ENCODE measurements at regions of chr7 and their contacts with region 1.

Region 1: DNA sequence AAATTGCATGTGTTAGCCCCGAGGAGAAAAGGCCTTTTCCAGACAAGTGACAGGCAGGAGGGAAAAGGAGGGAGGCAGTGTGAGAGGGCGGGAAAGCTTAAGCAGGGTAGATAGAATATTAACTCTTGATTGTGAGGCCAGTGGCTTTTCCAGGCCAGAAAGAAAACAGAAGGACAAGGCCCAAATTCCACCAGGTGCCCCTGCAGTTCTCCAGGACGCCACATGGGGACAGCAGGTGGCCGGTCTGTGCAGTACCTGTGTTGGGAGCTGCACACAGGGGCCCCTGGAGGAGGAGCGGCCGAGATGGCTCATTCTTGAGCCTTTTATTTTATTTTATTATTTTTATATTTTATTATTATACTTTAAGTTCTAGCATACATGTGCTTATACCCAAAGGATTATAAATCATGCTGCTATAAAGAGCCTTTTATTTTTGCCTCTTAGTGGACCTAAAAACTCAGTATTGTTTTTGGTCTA is 141.3 kb upstream of the KLF14 start:
- DNase-seq: peak; percentile 75 to 78
- ATAC-seq: peak; percentile 63 to 71
- H3K4me3 ChIP-seq: no peak overlapping the region
- H3K27ac ChIP-seq: peak overlapping the region; percentile 56 to 70; a peak in 5 of 6 replicates
- H3K4me1 ChIP-seq: peaks cover 95% of the 10 kb centered on the region
- CTCF ChIP-seq: peak; percentile 74
- EP300 ChIP-seq: no peak
- POLR2A ChIP-seq: no peak
- RAD21 ChIP-seq: peak; percentile 86 to 87

Region 2: DNA sequence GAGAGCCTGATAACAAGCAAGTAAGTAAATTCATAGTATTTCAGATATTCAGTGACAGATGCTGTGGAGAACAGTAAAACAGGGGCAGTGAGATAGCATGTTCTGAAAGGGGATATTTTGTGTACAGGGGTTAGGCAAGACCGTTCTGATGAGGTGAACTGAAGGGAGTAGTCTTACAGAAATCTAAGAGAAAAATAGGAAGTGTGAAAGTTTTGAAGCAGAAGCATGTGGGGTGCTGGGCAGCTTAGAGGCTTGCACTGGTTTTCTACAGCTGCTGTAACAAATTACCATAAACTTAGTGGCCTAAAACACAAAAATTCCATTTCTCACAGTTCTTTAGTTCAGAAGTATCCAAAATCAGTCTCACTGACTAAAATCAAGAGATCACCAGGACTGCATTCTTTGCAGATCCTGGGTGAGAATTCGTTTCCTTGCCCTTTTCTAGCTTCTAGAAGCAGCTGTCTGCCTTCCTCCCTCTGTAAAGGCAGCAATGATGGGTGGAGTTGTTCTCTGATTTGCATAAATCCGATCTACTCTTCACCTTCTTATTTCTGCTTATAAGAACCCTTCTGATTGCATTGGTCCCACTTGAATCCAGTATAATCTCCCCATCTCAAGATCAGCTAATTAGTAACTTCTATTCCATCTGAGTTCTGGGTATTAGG is 133.8 kb before region 1 on chr7:
- CTCF ChIA-PET with region 1: no interaction called
- POLR2A ChIA-PET with region 1: no interaction called
- DNase-seq: no peak
- ATAC-seq: no peak
- H3K4me3 ChIP-seq: no peak overlapping the region
- H3K27ac ChIP-seq: no peak overlapping the region
- H3K4me1 ChIP-seq: no peaks in the 10 kb centered on the region
- CTCF ChIP-seq: no peak
- EP300 ChIP-seq: no peak
- POLR2A ChIP-seq: no peak
- RAD21 ChIP-seq: no peak

Region 3: DNA sequence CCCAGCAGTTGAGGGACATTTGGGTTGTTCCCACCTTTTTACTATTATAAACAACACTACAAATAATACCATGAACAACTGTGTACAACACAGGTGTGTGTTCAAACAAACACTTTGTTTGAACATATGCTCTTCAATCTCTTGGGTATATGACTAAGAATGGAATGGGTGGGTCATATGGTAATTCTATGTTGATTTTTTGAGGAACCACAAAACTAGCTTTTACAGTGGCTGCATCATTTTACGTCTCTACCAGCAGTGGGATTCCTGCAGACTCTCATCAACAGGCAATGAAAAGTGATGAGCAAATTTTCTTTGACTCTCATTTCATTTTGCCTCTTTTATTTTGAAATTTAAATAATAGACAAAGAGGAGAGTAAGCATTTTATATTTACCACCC is 24.3 kb before region 1 on chr7:
- CTCF ChIA-PET with region 1: interaction called, 16 read pairs
- POLR2A ChIA-PET with region 1: interaction called, 3 read pairs
- DNase-seq: no peak
- ATAC-seq: no peak
- H3K4me3 ChIP-seq: no peak overlapping the region
- H3K27ac ChIP-seq: peak overlapping the region; percentile 5; a peak in 1 of 6 replicates
- H3K4me1 ChIP-seq: peaks cover 48% of the 10 kb centered on the region
- CTCF ChIP-seq: no peak
- EP300 ChIP-seq: no peak
- POLR2A ChIP-seq: no peak
- RAD21 ChIP-seq: no peak

Region 4: DNA sequence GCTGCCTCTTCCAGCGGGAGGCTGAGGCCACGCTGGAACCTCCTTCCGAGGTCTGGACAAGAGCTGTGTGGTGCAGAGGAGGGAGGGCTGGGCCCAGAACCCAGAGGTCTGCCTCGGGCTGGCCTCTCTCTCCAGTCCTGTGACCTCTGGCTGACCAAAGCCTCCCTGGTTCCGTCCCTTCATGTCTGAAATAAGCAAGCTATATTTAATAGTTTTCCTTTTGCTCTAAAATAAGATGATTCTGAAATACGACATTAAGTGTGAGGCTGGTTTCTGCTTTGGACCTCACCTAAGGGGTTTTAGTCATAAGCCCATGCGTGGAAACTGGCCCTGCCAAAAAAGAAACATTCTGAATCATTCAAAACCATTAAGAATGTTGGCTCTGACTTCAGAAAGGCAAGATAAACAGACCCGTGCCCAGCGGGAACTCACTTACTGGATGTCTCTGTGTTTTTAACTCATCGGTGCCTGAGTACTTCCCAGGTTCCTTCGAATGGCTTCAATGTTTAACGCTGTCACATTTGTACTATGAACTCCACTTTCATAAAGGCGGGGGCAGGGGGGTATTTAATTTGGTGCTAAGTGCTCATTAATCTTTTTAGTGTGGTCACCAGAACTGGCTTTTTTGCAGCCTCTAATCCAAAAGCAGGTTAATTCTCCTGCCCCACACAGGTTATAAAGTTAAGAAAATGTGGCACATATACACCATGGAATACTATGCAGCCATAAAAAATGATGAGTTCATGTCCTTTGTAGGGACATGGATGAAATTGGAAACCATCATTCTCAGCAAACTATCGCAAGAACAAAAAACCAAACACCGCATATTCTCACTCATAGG is 16.2 kb after region 1 on chr7:
- CTCF ChIA-PET with region 1: interaction called, 185 read pairs
- POLR2A ChIA-PET with region 1: interaction called, 4 read pairs
- DNase-seq: peak in 1 of 2 experiments; percentile 83
- ATAC-seq: peak in 1 of 2 experiments; percentile 12; a peak in 3 of 6 replicates
- H3K4me3 ChIP-seq: peak overlapping the region; percentile 16; the same call in 1 of the 3 replicates
- H3K27ac ChIP-seq: peak overlapping the region; percentile 94
- H3K4me1 ChIP-seq: peaks cover 97% of the 10 kb centered on the region
- CTCF ChIP-seq: no peak
- EP300 ChIP-seq: peak; percentile 35 to 79; a peak in 2 of 5 replicates
- POLR2A ChIP-seq: no peak
- RAD21 ChIP-seq: 0 out of 5 replicates have a peak, but pooled peaks of 1 of the 2 experiments have one; percentile 26